ENCODE measurements at regions of chr17 and their contacts with region 1.

Region 1: GRCh38 chr17:15157051-15157450 is 108.1 kb downstream of the PMP22 start:
- DNase-seq: no peak
- ATAC-seq: no peak
- H3K4me3 ChIP-seq: no peak overlapping the region
- H3K4me3 Mint-ChIP-seq: no peak overlapping the region
- H3K27ac ChIP-seq: no peak overlapping the region
- H3K27ac Mint-ChIP-seq: no peak overlapping the region
- H3K4me1 ChIP-seq: no peaks in the 10 kb centered on the region
- H3K4me1 Mint-ChIP-seq: peaks cover 0 to 4% (median 0%) of the 10 kb centered on the region in 7 donors
- H3K27me3 ChIP-seq: no peaks in the 10 kb centered on the region
- H3K27me3 Mint-ChIP-seq: peaks cover 19 to 51% (median 35%) of the 10 kb centered on the region in 5 donors

Region 2: DNA sequence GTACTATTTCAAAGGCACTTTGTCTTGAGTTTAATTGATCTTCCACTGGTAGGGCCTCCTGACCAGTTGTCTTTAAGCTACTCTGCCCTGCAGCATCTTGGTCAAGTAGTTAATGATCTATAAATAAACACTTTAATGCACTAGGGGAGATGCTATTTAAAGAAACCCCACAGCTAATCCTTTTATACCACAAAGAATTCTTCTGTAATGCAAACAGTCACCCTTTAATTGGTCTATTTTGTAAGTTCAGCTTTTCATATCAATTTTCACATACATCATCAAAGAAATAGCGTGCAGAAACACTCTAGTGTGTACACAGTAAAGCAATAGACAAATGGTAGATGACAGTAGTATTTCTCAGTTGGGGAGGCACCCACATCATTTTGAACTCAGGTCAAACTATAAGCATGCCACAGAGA is 37.8 kb after region 1 on chr17:
- CTCF ChIA-PET with region 1: no interaction called
- POLR2A ChIA-PET with region 1: no interaction called
- intact Hi-C with region 1: loop called in 1 of 2 experiments (anchors 2 kb)
- DNase-seq: no peak
- ATAC-seq: no peak
- H3K4me3 ChIP-seq: no peak overlapping the region
- H3K4me3 Mint-ChIP-seq: no peak overlapping the region
- H3K27ac ChIP-seq: no peak overlapping the region
- H3K27ac Mint-ChIP-seq: no peak overlapping the region
- H3K4me1 ChIP-seq: no peaks in the 10 kb centered on the region
- H3K4me1 Mint-ChIP-seq: no peaks in the 10 kb centered on the region
- H3K27me3 ChIP-seq: no peaks in the 10 kb centered on the region
- H3K27me3 Mint-ChIP-seq: peaks cover 0 to 44% (median 32%) of the 10 kb centered on the region in 5 donors

Region 3: GRCh38 chr17:15307710-15308111 is 150.7 kb after region 1 on chr17:
- CTCF ChIA-PET with region 1: no interaction called
- POLR2A ChIA-PET with region 1: no interaction called
- intact Hi-C with region 1: no loop called
- DNase-seq: no peak
- ATAC-seq: no peak
- H3K4me3 ChIP-seq: no peak overlapping the region
- H3K4me3 Mint-ChIP-seq: no peak overlapping the region
- H3K27ac ChIP-seq: no peak overlapping the region
- H3K27ac Mint-ChIP-seq: no peak overlapping the region
- H3K4me1 ChIP-seq: no peaks in the 10 kb centered on the region
- H3K4me1 Mint-ChIP-seq: no peaks in the 10 kb centered on the region
- H3K27me3 ChIP-seq: no peaks in the 10 kb centered on the region
- H3K27me3 Mint-ChIP-seq: peaks cover 0 to 7% (median 5%) of the 10 kb centered on the region in 5 donors

Measured in naive thymus-derived CD4-positive, alpha-beta T cell (primary cell).